Heart left ventricle (tissue), 16 donors: ENCODE measurements at regions of chr7 and their contacts with region 1.

Region 1: DNA sequence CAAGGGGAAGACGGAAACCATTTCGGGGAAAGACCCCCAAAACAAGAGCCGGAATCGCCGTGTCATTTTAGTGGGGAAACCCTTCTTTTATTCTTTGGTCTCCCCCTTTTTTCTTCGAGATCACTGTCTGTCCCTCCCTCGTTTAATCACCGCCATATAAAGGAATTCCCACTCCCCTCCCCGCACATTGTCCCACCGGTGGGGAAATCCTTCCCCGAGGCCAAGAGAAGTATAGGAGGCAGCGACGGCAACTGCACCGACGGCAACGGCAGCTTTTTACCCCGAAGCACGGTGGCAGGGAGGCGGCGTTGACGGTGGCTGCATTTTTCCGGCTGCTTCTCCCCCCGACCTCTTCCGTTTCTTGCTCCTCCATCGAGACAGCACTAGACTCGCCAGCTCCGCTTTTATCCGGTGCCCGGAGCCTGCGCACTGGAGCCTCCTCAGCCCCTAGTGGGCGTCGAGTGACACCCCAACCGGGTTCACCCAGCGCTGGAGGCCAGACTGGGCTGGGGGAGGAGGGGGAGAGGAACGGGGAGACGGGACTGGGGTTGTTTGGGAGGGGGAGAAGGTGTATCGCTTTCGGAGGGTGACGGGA is 687 bp upstream of the KMT2E start:
- DNase-seq: peak; percentile 95 to 98 (median 97)
- ATAC-seq: peak; percentile 82 to 88 (median 85)
- H3K4me3 ChIP-seq: peak overlapping the region; percentile 72 to 92 (median 82)
- H3K27ac ChIP-seq: peak overlapping the region; percentile 98 to 100 (median 100)
- H3K4me1 ChIP-seq: peaks cover 0 to 50% (median 33%) of the 10 kb centered on the region in 12 donors
- H3K27me3 ChIP-seq: no peaks in the 10 kb centered on the region
- CTCF ChIP-seq: peak; percentile 30 to 63 (median 50)
- POLR2A ChIP-seq: peak; percentile 68 to 74

Region 2: DNA sequence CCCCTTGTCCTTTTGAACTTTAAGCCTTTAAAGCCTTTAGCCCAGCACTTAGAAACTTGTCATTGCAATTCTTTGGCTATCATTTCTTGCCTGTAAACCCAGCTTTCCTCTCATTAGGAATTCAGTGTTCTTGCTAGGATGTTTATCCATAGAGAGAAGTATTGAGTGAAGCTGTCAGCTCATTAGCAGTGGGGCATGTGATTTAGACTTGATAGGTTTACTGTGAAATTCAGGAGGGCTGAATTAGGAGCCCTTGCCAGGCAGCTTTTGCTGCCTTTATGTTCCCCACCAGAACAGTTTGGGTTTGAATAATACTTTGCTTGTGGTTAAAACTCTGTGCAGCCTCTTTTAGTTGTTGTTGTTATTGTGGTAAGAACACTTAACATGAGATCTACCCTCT is 645.4 kb before region 1 on chr7:
- intact Hi-C with region 1: no loop called
- DNase-seq: no peak
- ATAC-seq: no peak
- H3K4me3 ChIP-seq: no peak overlapping the region
- H3K27ac ChIP-seq: no peak overlapping the region
- H3K4me1 ChIP-seq: no peaks in the 10 kb centered on the region
- H3K27me3 ChIP-seq: no peaks in the 10 kb centered on the region
- CTCF ChIP-seq: no peak
- POLR2A ChIP-seq: no peak

Region 3: DNA sequence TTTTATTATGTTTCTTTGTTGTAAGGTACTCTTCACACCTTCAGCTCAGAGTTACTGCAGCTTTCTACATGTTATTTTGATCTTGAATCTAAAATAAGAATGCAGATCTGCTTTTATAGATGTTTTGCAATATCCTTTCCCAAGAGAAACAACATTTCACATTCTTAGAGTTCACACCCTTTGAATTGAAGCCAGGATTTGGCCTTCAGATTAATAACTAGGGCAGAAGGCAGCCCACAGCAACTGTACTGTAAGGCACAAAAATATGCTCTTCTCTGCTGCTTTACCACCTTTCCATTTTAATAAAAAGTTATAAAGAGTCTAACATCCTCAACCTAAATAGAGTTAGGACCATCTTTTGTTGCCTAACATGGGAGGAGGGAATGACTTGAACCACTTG is 460.2 kb before region 1 on chr7:
- intact Hi-C with region 1: no loop called
- DNase-seq: no peak
- ATAC-seq: no peak
- H3K4me3 ChIP-seq: no peak overlapping the region
- H3K27ac ChIP-seq: no peak overlapping the region
- H3K4me1 ChIP-seq: no peaks in the 10 kb centered on the region
- H3K27me3 ChIP-seq: no peaks in the 10 kb centered on the region
- CTCF ChIP-seq: no peak
- POLR2A ChIP-seq: no peak

Region 4: GRCh38 chr7:105060437-105060836 is 47.1 kb after region 1 on chr7:
- intact Hi-C with region 1: loop called in 3 of 10 experiments (anchors 5 to 10 kb)
- DNase-seq: no peak
- ATAC-seq: peak in 3 of 4 donors; percentile 25 to 46 (median 35)
- H3K4me3 ChIP-seq: no peak overlapping the region
- H3K27ac ChIP-seq: peak overlapping the region in 2 of 12 donors; percentile 19 to 39
- H3K4me1 ChIP-seq: peaks cover 0 to 76% (median 52%) of the 10 kb centered on the region in 12 donors
- H3K27me3 ChIP-seq: no peaks in the 10 kb centered on the region
- CTCF ChIP-seq: no peak
- POLR2A ChIP-seq: no peak